HepG2 (cell line): ENCODE measurements at regions of chr3 and their contacts with region 1.

Region 1: GRCh38 chr3:194315088-194315964 is 35.8 kb downstream of the CPN2 start:
- DNase-seq: peak; percentile 50
- ATAC-seq: peak; percentile 85
- H3K4me3 ChIP-seq: peak overlapping the region; percentile 52 to 75 (median 56); a peak in 5 of 6 replicates
- H3K27ac ChIP-seq: no peak overlapping the region
- H3K4me1 ChIP-seq: peaks cover 54% of the 10 kb centered on the region
- H3K27me3 ChIP-seq: peaks cover 2 to 23% of the 10 kb centered on the region in 2 experiments; a peak in 4 of 5 replicates
- CTCF ChIP-seq: peak; percentile 94
- EP300 ChIP-seq: no peak
- POLR2A ChIP-seq: no peak
- RAD21 ChIP-seq: peak; percentile 99

Region 2: GRCh38 chr3:193665370-193665989 is 649.8 kb before region 1 on chr3:
- CTCF ChIA-PET with region 1: interaction called, 6 read pairs
- POLR2A ChIA-PET with region 1: no interaction called
- in situ Hi-C with region 1: loop called (anchors 25 kb)
- intact Hi-C with region 1: loop called (anchors 1 kb)
- DNase-seq: peak; percentile 25
- ATAC-seq: no peak
- H3K4me3 ChIP-seq: no peak overlapping the region
- H3K27ac ChIP-seq: no peak overlapping the region
- H3K4me1 ChIP-seq: peaks cover 14% of the 10 kb centered on the region; the same call in 1 of the 2 replicates
- H3K27me3 ChIP-seq: no peaks in the 10 kb centered on the region
- CTCF ChIP-seq: peak; percentile 34
- EP300 ChIP-seq: no peak
- POLR2A ChIP-seq: no peak
- RAD21 ChIP-seq: no peak

Region 3: GRCh38 chr3:193780810-193781472 is 534.4 kb before region 1 on chr3:
- CTCF ChIA-PET with region 1: interaction called, 17 read pairs
- POLR2A ChIA-PET with region 1: interaction called, 4 read pairs
- in situ Hi-C with region 1: loop called (anchors 5 kb)
- intact Hi-C with region 1: loop called (anchors 2 kb)
- DNase-seq: peak; percentile 44
- ATAC-seq: peak; percentile 88
- H3K4me3 ChIP-seq: no peak overlapping the region; a peak in 1 of 6 replicates
- H3K27ac ChIP-seq: no peak overlapping the region
- H3K4me1 ChIP-seq: peaks cover 72% of the 10 kb centered on the region
- H3K27me3 ChIP-seq: peaks cover 0 to 20% of the 10 kb centered on the region in 2 experiments; a peak in 4 of 5 replicates
- CTCF ChIP-seq: peak; percentile 79
- EP300 ChIP-seq: no peak
- POLR2A ChIP-seq: no peak
- RAD21 ChIP-seq: peak; percentile 89

Region 4: GRCh38 chr3:193788189-193788991 is 526.9 kb before region 1 on chr3:
- CTCF ChIA-PET with region 1: interaction called, 16 read pairs
- POLR2A ChIA-PET with region 1: no interaction called
- in situ Hi-C with region 1: loop called (anchors 5 kb)
- intact Hi-C with region 1: loop called (anchors 2 kb)
- DNase-seq: peak; percentile 64
- ATAC-seq: peak; percentile 98
- H3K4me3 ChIP-seq: no peak overlapping the region
- H3K27ac ChIP-seq: no peak overlapping the region
- H3K4me1 ChIP-seq: no peaks in the 10 kb centered on the region
- H3K27me3 ChIP-seq: peaks cover 0 to 16% of the 10 kb centered on the region in 2 experiments; a peak in 3 of 5 replicates
- CTCF ChIP-seq: peak; percentile 92
- EP300 ChIP-seq: no peak
- POLR2A ChIP-seq: no peak
- RAD21 ChIP-seq: peak; percentile 85

Region 5: DNA sequence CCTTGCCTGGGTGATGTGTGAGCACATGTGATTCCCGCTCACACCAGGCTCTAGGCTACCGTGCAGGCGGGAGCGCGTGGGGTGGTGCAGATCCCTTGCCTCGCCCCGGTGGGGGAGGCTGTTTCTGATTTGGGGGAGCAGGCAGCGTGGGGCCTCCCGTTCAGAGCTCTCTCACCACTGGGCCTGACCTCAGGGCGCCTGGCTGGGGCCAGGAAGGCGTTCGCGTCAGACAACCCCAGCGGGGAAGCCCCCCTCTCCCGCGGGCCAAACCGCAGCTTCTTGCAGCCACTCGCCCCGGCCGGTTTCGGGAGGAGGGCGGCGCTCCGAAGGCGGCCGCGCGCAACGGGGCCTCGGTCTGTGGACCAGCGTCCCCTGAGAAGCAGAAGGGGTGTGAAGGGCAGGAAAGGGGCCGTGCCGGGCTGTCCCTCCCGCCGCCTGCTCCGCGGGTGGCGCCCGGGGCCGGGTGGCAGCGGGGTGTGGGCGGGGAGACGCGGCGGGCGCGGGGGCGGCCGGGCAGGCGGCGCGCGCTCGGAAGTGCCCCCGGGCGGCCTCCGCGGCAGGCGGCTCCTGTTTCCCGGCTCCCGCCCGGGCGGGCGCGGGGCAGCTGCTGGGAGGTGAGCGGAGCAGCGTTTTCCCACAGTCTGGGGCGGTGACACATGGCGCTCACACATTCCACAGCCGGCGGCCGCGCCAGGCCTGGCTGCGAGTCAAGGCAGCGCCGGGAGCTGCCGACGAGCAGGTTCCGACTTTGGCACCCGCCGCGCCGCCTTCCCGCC is 244.5 kb before region 1 on chr3:
- CTCF ChIA-PET with region 1: no interaction called
- POLR2A ChIA-PET with region 1: no interaction called
- in situ Hi-C with region 1: no loop called
- intact Hi-C with region 1: loop called (anchors 10 kb)
- DNase-seq: peak; percentile 47
- ATAC-seq: peak; percentile 67
- H3K4me3 ChIP-seq: peak overlapping the region; percentile 41 to 68 (median 47); a peak in 5 of 6 replicates
- H3K27ac ChIP-seq: peak overlapping the region; percentile 68
- H3K4me1 ChIP-seq: peaks cover 53% of the 10 kb centered on the region
- H3K27me3 ChIP-seq: no peaks in the 10 kb centered on the region; a peak in 1 of 5 replicates
- CTCF ChIP-seq: no peak
- EP300 ChIP-seq: no peak; a peak in 2 of 4 replicates
- POLR2A ChIP-seq: peak in 1 of 2 experiments; percentile 33; a peak in 1 of 4 replicates
- RAD21 ChIP-seq: no peak; the same call in 1 of the 2 replicates

Region 6: GRCh38 chr3:194141415-194142155 is 173.7 kb before region 1 on chr3:
- CTCF ChIA-PET with region 1: no interaction called
- POLR2A ChIA-PET with region 1: interaction called, 10 read pairs
- in situ Hi-C with region 1: loop called (anchors 5 kb)
- intact Hi-C with region 1: loop called (anchors 1 kb)
- DNase-seq: peak; percentile 78
- ATAC-seq: peak; percentile 66
- H3K4me3 ChIP-seq: peak overlapping the region; percentile 51 to 74 (median 62); a peak in 5 of 6 replicates
- H3K27ac ChIP-seq: peak overlapping the region; percentile 92
- H3K4me1 ChIP-seq: peaks cover 45% of the 10 kb centered on the region
- H3K27me3 ChIP-seq: peaks cover 0 to 3% of the 10 kb centered on the region in 2 experiments; a peak in 2 of 5 replicates
- CTCF ChIP-seq: peak; percentile 30; the same call in 1 of the 2 replicates
- EP300 ChIP-seq: peak in 1 of 2 experiments; percentile 67; a peak in 2 of 4 replicates
- POLR2A ChIP-seq: peak in 1 of 2 experiments; percentile 66; a peak in 1 of 4 replicates
- RAD21 ChIP-seq: peak; percentile 65

Region 7: DNA sequence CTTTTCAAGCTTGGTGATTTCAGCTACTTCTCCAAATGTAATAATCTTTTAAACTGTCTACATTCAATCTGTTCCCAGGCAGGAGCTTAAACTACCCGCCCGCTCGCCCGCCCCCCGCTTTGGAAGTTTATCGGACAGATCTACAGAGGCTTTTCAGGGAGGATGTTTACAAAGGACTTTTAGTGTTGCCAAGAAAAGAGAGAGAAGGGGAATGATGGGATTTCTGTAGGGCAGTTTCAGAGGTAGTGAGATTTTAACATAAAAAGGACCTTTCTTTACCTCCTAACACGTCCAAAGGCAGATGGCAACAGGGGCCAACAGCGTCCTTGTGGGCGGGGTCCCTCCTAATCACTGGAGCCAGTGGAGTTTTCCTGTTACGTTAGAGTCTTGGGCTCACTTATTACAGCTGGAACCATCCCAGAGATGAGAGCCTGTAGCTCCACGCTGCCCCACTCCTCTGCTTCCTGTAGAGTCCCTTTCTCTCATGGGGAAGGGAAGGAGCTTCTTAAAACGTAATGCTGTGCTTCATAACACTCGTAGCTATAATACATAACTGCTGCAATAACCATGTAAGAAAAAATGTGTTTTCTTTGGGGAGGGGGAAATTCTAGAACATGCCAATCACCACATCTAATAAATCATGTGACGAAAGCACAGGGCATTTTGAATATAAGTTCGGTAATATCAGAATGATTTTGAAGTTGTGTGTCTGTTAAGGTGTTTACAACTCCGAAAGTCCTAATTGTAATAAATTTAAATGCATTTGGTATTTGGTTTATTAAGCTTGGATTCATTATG is 148.4 kb before region 1 on chr3:
- CTCF ChIA-PET with region 1: no interaction called
- POLR2A ChIA-PET with region 1: no interaction called
- in situ Hi-C with region 1: loop called (anchors 10 kb)
- intact Hi-C with region 1: no loop called
- DNase-seq: no peak
- ATAC-seq: no peak
- H3K4me3 ChIP-seq: peak overlapping the region in 1 of 3 experiments; percentile 23; a peak in 1 of 6 replicates
- H3K27ac ChIP-seq: no peak overlapping the region
- H3K4me1 ChIP-seq: peaks cover 58% of the 10 kb centered on the region
- H3K27me3 ChIP-seq: peaks cover 0 to 25% of the 10 kb centered on the region in 2 experiments; a peak in 2 of 5 replicates
- CTCF ChIP-seq: no peak
- EP300 ChIP-seq: no peak
- POLR2A ChIP-seq: no peak
- RAD21 ChIP-seq: no peak